Gastrocnemius medialis (tissue), 4 donors: ENCODE measurements at regions of chr1 and their contacts with region 1.

Region 1: DNA sequence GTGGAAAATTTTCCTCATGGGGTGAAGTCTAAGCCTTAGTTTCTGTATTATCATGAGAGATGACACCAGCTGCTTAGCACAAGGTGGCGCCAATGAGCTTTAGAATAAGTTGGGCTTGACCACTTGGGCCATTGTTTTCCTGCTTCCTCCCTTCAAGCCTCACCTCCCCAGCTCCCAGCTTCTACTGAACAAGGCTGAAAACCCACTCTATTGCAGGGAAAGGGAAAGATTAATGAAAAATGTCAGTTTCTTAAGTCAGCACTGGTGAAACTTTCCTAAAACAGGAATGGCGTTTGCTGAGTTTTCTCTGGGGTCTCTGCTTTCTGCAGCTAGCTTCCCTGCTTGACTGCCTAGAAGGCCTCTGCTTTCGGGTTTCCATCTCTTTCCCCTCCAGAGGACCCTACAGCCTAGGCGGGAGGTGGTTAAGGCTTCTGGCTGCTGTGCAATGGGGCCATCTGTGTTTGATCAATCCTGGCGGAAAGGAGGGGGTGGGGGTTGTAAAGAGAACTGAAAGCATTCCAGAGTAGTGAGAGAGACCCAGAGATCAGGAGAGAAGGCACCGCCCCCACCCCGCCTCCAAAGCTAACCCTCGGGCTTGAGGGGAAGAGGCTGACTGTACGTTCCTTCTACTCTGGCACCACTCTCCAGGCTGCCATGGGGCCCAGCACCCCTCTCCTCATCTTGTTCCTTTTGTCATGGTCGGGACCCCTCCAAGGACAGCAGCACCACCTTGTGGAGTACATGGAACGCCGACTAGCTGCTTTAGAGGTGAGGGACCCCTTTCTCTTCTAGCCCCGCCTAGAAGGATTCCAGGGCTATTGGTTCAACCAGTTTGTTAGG is at the start of gene OLFML3:
- DNase-seq: peak; percentile 71 to 81
- ATAC-seq: peak; percentile 64 to 67
- H3K4me3 ChIP-seq: peak within 1 kb of the TSS in 2 of 4 donors; percentile 14 to 25
- H3K27ac ChIP-seq: peak within 1 kb of the TSS; percentile 54 to 76 (median 72)
- H3K4me1 ChIP-seq: peaks cover 59 to 72% of the 10 kb centered on the region in 2 donors
- H3K27me3 ChIP-seq: no peaks in the 10 kb centered on the region
- CTCF ChIP-seq: peak; percentile 68 to 80 (median 73)
- POLR2A ChIP-seq: peak in 1 of 2 donors; percentile 15
- total RNA-seq, gene OLFML3: 5.9 to 17.1 (median 14.0) TPM

Region 2: GRCh38 chr1:114075546-114076242 is 96.6 kb after region 1 on chr1:
- in situ Hi-C with region 1: loop called in 1 of 4 experiments (anchors 25 kb)
- intact Hi-C with region 1: loop called (anchors 5 kb)
- DNase-seq: no peak
- ATAC-seq: no peak
- H3K4me3 ChIP-seq: no peak overlapping the region
- H3K27ac ChIP-seq: no peak overlapping the region
- H3K4me1 ChIP-seq: peaks cover 0 to 3% of the 10 kb centered on the region in 2 donors
- H3K27me3 ChIP-seq: no peaks in the 10 kb centered on the region
- CTCF ChIP-seq: no peak
- POLR2A ChIP-seq: no peak

Region 3: DNA sequence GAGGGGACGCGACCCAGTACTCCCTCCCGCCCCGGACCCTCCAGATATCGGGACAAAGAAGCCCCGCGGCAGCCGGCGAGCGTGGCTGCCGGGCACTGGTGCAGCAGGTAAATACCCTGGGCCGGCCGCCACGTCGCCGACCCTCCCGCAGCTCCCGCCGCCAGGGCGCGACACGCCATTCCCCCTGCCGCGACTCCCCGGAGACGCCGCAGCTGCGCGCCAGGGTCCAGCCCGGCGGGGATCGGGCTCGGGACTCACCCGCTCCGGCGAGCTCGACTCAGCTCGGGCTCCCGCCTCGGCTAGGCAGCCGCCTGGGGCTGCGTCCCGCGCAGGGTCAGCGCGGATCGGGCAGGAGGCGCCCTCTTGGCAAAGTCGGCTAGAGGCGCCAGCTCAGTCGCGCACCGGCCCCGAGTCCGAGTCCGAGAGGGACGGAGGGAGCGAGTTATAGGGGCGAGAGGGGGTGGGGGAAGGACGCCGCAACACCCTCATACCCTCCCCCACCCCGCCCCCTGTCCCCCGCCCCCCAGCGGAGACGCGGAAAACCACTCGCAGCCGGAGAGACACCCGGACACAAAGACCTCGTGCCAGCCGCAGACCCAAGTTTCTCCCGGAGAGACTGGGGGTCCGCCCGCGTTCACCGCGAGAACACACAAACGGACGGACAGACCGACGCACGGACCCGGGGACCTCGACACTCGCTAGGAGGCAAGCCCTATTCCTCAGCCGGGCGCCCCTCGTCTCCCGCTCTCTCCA is 173.6 kb after region 1 on chr1:
- in situ Hi-C with region 1: no loop called
- intact Hi-C with region 1: loop called (anchors 2 kb)
- DNase-seq: no peak
- ATAC-seq: peak; percentile 72 to 80
- H3K4me3 ChIP-seq: peak overlapping the region; percentile 38 to 59 (median 52)
- H3K27ac ChIP-seq: no peak overlapping the region
- H3K4me1 ChIP-seq: peaks cover 13 to 24% of the 10 kb centered on the region in 2 donors
- H3K27me3 ChIP-seq: peaks cover 52 to 59% (median 58%) of the 10 kb centered on the region in 3 donors
- CTCF ChIP-seq: peak in 1 of 5 experiments; percentile 11
- POLR2A ChIP-seq: no peak

Region 4: DNA sequence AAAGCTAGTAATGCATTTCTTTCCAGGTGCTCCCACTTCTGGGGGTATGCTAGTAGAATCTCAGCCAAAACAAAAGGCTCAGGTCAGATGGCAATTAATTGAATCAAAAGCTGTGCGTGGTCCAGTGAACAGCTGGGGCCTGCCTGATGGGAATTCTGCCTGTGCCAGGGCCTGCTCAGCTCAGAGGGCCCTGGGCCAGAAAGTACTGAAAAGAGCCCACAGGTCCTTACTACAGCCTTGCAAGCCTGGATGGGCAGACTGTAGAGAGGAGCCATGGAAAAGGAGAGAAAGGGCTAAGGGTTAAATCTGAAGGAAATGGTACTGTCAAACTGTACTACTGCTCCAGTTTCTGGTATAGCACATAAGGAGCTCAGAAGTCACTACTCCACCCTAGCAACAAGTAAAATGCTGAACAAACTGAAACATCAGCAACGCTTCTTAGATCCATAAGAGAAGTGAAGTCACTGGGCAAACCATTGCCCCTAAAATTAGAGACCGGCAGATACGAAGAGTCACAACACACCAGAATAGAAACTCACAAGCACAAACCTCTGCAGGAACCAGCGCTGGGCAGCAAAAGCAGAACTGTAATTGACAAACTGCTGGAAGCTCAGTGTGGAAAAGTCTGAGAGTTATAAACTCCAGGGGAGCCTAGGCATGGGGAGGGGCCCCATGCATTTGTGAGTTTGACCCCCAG is 295.7 kb after region 1 on chr1:
- in situ Hi-C with region 1: loop called in 3 of 4 experiments (anchors 5 kb)
- intact Hi-C with region 1: no loop called
- DNase-seq: no peak
- ATAC-seq: no peak
- H3K4me3 ChIP-seq: no peak overlapping the region
- H3K27ac ChIP-seq: no peak overlapping the region
- H3K4me1 ChIP-seq: no peaks in the 10 kb centered on the region
- H3K27me3 ChIP-seq: no peaks in the 10 kb centered on the region
- CTCF ChIP-seq: no peak
- POLR2A ChIP-seq: no peak

Region 5: DNA sequence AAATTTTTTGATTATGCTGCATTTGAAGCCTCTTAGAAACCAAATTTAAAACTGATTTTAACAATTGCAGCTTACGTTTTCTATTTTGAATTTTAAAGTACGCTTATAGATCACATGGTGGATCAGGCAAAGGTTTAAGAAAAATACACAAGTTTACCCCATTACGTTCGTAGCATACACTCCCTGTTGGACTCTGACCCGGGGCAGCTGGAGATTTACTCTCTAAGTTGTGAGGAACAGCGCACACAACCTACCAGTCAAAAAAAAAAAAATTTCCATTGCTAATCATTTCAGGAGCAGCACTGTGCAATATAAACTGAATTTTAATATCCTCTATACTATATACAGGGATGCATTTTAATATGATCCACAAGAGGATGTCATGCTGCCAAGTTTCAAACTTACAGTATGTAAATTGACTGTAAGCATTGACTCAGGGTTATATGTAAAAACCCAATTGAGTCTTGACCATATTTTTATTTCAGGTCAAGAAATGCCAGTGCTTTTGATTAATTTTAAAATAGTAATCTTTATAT is 758.3 kb after region 1 on chr1:
- in situ Hi-C with region 1: no loop called
- intact Hi-C with region 1: no loop called
- DNase-seq: no peak
- ATAC-seq: no peak
- H3K4me3 ChIP-seq: no peak overlapping the region
- H3K27ac ChIP-seq: peak overlapping the region; percentile 65 to 99 (median 70)
- H3K4me1 ChIP-seq: peaks cover 61 to 70% of the 10 kb centered on the region in 2 donors
- H3K27me3 ChIP-seq: no peaks in the 10 kb centered on the region
- CTCF ChIP-seq: no peak
- POLR2A ChIP-seq: no peak